ENCODE measurements at regions of chr6 and their contacts with region 1.

Region 1: DNA sequence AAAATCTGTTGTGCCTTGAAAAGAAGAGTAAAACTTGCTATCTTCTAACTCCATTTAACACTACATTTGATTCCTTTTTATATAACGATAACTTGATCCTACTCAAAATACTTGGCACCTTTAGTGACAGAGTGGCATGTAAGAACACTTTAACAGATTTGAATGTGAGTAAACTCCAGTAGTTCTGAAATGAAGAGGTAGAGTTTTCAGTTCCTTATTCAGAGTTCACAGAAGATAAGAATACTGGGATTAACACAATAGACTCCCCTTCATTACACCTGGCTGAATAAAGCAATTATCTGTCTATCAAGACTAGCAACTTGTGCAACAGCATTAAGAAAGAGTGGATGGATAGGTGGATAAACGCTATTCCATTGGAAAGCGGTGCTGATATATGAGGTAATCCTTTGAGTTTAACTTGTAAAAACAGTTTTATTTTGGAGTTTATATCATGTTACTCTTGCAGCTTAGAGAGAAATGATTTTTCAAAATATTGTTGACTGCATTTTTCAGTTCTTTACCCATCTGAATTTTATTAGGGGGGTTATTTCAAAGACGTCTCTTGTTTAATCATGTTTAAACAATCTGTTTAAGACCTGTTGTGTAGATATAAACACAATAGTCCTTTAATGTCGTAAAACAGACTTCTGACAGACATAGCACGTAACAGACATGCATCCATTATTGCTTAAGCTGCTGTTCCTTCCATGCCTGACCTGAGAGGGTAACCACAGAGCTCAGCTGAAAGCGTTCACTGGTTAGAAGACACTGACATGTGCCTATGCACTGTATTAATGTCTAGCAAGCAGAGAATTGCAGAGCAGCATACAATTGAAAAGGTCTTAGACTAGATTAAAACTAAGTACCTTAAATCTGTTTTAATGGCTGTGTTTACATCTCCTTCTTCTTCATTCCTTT is 102.4 kb upstream of the SUPT3H start:
- DNase-seq: no peak
- H3K4me3 Mint-ChIP-seq: no peak overlapping the region
- H3K27ac Mint-ChIP-seq: no peak overlapping the region
- H3K4me1 Mint-ChIP-seq: peaks cover 15% of the 10 kb centered on the region
- H3K27me3 Mint-ChIP-seq: no peaks in the 10 kb centered on the region

Region 2: DNA sequence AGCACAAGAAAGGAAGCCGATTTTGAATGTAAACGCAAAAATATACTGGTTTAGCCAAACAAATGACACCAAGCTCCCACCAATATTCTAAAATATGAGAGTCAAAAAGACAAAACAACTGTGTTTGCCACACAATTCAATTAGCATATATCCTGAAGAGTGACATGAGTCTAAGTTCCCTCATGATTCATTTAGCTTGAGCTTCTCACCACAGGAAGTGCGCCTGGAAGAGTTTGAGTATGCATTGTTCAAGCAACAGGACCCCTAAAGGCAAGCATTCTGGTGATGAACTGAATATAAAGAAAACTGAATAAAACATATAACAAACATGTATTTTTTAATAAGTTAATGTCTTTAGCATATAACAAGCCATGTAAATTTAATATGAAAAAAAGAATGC is 267.1 kb before region 1 on chr6:
- CTCF ChIA-PET with region 1: no interaction called
- intact Hi-C with region 1: no loop called
- DNase-seq: peak; percentile 20
- H3K4me3 Mint-ChIP-seq: no peak overlapping the region
- H3K27ac Mint-ChIP-seq: no peak overlapping the region
- H3K4me1 Mint-ChIP-seq: peaks cover 14% of the 10 kb centered on the region
- H3K27me3 Mint-ChIP-seq: no peaks in the 10 kb centered on the region

Region 3: DNA sequence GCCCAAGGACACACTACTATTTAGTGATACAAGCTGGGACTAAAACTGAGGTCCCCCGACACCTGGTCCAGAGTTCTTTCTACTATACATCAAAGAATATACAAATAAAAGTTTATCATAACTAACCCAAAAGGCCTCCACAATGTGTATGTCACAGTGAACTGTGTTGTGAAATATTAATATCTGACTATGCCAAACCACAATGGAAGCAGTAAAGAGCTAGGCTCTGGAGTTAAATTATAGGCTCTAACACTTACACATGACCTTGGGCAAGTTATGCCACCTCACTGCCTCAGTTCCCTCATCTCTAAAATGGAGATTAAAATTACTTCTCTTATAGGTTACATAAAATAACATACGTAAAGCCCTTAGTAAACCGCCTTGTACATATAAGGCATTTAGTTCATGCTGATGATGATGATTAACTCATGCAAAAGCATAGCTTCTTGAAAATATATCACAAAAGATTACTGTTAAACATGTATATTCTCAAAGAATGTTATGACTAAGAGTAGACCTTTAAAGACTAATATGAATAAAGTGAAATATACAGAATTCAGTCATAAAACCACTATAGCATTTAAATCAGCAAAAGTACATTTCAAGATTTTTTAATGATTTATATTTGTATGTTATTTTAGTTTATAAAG is 108.0 kb before region 1 on chr6:
- CTCF ChIA-PET with region 1: no interaction called
- intact Hi-C with region 1: loop called (anchors 2 kb)
- DNase-seq: peak; percentile 15
- H3K4me3 Mint-ChIP-seq: no peak overlapping the region
- H3K27ac Mint-ChIP-seq: peak overlapping the region; percentile 47
- H3K4me1 Mint-ChIP-seq: peaks cover 35% of the 10 kb centered on the region
- H3K27me3 Mint-ChIP-seq: no peaks in the 10 kb centered on the region

Region 4: GRCh38 chr6:45436544-45437438 is 43.3 kb before region 1 on chr6:
- CTCF ChIA-PET with region 1: no interaction called
- intact Hi-C with region 1: loop called (anchors 1 kb)
- DNase-seq: peak; percentile 77
- H3K4me3 Mint-ChIP-seq: peak overlapping the region; percentile 35
- H3K27ac Mint-ChIP-seq: peak overlapping the region; percentile 76
- H3K4me1 Mint-ChIP-seq: peaks cover 58% of the 10 kb centered on the region
- H3K27me3 Mint-ChIP-seq: no peaks in the 10 kb centered on the region

Region 5: DNA sequence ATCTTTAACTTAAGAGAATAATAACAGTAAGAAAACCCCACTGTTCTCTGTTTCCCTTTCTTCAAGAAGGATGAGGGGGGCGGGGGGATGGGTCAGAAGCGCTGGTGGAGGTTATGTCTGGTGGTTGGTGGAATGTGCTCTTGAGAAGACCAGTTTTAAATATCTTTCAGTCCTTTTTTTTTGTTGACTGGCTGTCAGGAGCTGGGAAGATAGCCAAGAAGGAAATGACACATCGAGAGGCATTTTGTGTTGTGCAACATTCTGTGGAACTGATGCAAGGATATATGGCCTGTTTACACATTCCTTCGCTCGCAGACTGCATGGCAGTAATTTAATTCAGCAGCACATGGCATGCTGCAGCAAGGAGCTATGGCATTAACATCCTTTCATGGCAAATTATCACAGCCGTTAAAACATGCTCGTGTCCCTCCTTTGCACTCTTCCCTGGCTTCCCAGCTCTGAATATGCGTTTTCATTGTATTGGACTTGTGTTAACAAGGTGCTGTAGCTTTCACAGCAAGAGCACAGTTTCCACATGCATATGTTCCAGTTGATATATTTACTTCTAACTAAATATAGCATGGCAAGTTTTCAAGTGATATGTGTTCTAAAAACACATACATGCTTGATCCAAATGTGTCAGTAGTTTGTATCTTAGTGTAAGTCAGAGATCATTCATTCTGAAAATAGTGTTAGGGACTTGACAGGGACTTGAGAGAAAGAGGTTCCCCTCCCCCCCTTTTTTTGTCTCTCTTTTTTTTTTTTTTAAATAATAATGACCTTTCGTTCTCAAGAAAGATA is 34.1 kb before region 1 on chr6:
- CTCF ChIA-PET with region 1: no interaction called
- intact Hi-C with region 1: loop called (anchors 1 kb)
- DNase-seq: peak; percentile 60
- H3K4me3 Mint-ChIP-seq: no peak overlapping the region
- H3K27ac Mint-ChIP-seq: peak overlapping the region; percentile 60
- H3K4me1 Mint-ChIP-seq: peaks cover 59% of the 10 kb centered on the region
- H3K27me3 Mint-ChIP-seq: no peaks in the 10 kb centered on the region

Region 6: DNA sequence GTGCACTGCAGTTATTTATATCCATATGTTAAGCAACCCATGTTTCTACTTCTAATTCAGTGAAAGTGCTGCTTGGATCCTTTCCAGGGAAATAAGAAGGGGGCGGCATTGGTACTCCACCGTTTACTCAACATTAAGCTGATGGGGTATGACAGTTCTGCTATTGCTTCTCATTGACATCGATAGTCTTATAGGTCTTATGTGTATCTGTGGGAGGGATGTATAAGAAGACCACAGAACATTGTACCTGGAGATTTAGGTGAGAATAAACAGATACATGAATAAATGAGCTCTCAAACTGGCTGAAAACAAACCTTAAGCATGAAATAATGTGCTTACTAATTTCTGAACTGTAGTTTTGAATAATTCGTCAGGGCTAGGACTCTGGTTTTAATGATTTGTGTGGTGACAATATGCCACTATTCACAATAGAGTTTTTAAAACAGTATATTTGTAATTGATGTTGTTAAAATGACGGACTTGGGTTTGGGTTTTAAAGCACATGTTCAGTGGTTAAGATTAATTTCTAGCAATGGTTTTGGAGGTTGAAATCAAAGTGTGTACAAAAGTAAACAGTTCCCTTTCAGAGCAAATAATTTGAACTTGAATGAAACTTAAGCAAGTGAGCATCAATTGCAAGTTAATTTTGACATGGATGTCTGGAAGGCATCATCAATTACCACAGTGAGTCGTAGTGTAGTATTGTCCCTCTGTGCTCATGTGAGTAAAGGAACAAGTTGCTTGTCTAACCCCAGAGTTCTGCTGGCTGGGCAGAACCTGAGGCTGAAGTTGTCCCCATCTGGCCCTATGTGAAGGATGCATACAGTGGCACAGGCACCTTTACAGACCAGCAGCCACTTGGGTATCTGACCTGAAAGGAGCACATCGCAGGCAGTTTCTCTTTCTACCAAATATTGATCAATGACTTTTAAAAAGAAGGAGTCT is 17.6 kb before region 1 on chr6:
- CTCF ChIA-PET with region 1: no interaction called
- intact Hi-C with region 1: no loop called
- DNase-seq: no peak
- H3K4me3 Mint-ChIP-seq: no peak overlapping the region
- H3K27ac Mint-ChIP-seq: no peak overlapping the region
- H3K4me1 Mint-ChIP-seq: peaks cover 14% of the 10 kb centered on the region
- H3K27me3 Mint-ChIP-seq: no peaks in the 10 kb centered on the region

Region 7: GRCh38 chr6:45590225-45590624 is 110.1 kb after region 1 on chr6:
- CTCF ChIA-PET with region 1: no interaction called
- intact Hi-C with region 1: loop called (anchors 1 kb)
- DNase-seq: no peak
- H3K4me3 Mint-ChIP-seq: no peak overlapping the region
- H3K27ac Mint-ChIP-seq: no peak overlapping the region
- H3K4me1 Mint-ChIP-seq: peaks cover 77% of the 10 kb centered on the region
- H3K27me3 Mint-ChIP-seq: no peaks in the 10 kb centered on the region

Region 8: GRCh38 chr6:45737331-45738056 is 257.4 kb after region 1 on chr6:
- CTCF ChIA-PET with region 1: no interaction called
- intact Hi-C with region 1: loop called (anchors 2 kb)
- DNase-seq: peak; percentile 38
- H3K4me3 Mint-ChIP-seq: no peak overlapping the region
- H3K27ac Mint-ChIP-seq: peak overlapping the region; percentile 9
- H3K4me1 Mint-ChIP-seq: peaks cover 32% of the 10 kb centered on the region
- H3K27me3 Mint-ChIP-seq: peaks cover 29% of the 10 kb centered on the region

Measured in activated naive CD4-positive, alpha-beta T cell treated with anti-CD3 and anti-CD28 coated beads for 36 hours (primary cell).